OCI-LY7 (cell line): ENCODE measurements at regions of chr19 and their contacts with region 1.

Region 1: GRCh38 chr19:35942235-35942634 is 6.1 kb downstream of the LRFN3 start:
- DNase-seq: no peak
- H3K4me3 ChIP-seq: no peak overlapping the region
- H3K27ac ChIP-seq: no peak overlapping the region
- H3K4me1 ChIP-seq: no peaks in the 10 kb centered on the region
- CTCF ChIP-seq: no peak

Region 2: GRCh38 chr19:35311901-35312665 is 630.2 kb before region 1 on chr19:
- CTCF ChIA-PET with region 1: interaction called, 13 read pairs
- POLR2A ChIA-PET with region 1: no interaction called
- intact Hi-C with region 1: no loop called
- DNase-seq: no peak
- H3K4me3 ChIP-seq: no peak overlapping the region
- H3K27ac ChIP-seq: no peak overlapping the region
- H3K4me1 ChIP-seq: peaks cover 71% of the 10 kb centered on the region
- CTCF ChIP-seq: no peak

Region 3: GRCh38 chr19:35963514-35963913 is 21.3 kb after region 1 on chr19:
- CTCF ChIA-PET with region 1: no interaction called
- POLR2A ChIA-PET with region 1: no interaction called
- intact Hi-C with region 1: no loop called
- DNase-seq: no peak
- H3K4me3 ChIP-seq: no peak overlapping the region
- H3K27ac ChIP-seq: no peak overlapping the region
- H3K4me1 ChIP-seq: no peaks in the 10 kb centered on the region
- CTCF ChIP-seq: no peak

Region 4: DNA sequence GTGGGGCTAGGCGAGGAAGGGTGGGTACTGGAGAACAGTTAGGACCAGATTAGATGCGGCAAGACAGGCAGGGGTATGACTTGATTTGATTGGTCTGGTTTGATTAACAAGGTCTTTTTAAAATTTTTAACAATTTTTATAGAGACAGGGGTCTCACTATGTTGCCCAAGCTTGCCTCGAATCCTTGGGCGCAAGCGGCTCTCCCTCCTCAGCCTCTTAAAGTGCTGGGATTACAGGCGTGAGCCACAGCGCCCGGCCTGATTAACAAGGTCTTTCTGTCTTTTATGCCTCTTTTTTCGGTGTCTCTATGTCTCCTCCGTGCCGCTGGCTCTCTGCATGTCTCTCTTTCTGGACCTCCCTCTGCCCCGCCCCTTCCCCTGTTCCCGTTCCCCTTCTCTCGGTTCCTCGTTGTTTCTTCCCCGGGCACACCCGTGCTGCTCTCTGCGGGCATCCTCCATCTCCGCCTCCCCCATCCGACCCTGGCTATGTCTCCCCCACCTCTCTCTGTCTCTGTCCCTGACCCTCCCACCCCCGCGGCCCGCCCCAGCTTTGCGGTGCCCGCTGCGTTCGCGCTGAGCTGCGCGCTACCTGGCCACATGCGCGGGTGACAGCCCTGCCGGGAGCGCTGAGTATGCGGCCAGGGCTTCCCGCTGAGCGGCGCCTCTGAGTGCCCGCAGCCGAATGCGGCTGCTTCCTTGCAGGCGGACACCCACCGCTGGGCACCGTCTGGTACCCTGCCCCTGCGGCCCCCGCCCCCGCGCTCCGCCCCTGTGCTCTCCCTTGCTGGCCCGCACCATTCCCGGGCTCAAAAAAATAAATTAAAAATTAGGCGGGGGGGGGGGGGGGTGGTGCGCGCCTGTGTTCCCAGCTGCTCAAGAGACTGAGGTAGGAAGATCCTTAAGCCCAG is 44.7 kb after region 1 on chr19:
- CTCF ChIA-PET with region 1: no interaction called
- POLR2A ChIA-PET with region 1: no interaction called
- intact Hi-C with region 1: no loop called
- DNase-seq: peak; percentile 39
- H3K4me3 ChIP-seq: peak overlapping the region; percentile 56
- H3K27ac ChIP-seq: no peak overlapping the region
- H3K4me1 ChIP-seq: peaks cover 5% of the 10 kb centered on the region
- CTCF ChIP-seq: no peak